RWPE1 (cell line): ENCODE measurements at regions of chr11 and their contacts with region 1.

Region 1: GRCh38 chr11:77047007-77047927 is 13.1 kb downstream of the B3GNT6 start:
- DNase-seq: peak; percentile 73
- H3K27ac ChIP-seq: no peak overlapping the region
- CTCF ChIP-seq: peak; percentile 49

Region 2: GRCh38 chr11:77009533-77010160 is 37.6 kb before region 1 on chr11:
- CTCF ChIA-PET with region 1: no interaction called
- POLR2A ChIA-PET with region 1: no interaction called
- DNase-seq: no peak
- H3K27ac ChIP-seq: no peak overlapping the region
- CTCF ChIP-seq: no peak

Region 3: GRCh38 chr11:77062924-77063323 is 15.7 kb after region 1 on chr11:
- CTCF ChIA-PET with region 1: interaction called, 10 read pairs
- POLR2A ChIA-PET with region 1: no interaction called
- DNase-seq: no peak
- H3K27ac ChIP-seq: no peak overlapping the region
- CTCF ChIP-seq: no peak

Region 4: DNA sequence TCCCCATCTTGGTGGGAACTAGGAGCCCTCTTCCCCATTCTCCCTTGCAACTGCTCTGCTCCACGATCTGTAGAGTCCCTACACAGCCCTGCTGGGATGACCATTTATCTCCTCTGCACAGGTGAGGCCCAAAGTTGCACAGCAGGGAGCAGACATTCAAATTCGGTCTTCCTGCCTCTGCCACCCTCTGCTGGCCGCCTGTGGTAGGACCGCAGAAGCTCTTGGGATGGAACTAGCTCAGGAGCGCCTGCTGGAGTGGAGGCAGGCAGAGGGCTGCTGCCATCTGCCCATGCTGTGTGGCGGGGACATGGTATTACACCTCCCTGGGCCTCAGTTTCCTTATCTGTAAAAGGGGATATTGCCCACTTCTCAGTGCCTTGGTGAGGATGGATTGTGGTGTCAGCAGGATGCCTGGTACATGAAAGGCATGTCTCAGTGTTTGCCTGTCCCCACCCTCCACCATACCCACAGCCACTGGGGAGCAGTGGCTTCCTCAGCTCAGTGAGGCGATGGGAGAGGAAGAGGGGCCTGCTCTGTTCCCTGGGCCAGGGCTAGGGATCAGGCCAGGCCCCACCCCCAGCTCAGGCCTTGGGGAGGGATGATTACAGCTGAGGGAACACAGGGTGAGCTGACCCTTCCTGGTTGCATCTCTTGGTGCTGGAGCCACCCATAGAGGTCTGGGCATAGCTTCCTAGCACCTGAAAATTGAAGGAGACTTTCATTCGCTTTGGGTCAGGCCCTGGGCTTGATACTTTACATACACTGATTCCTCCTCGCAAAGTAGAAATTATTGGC is 44.1 kb after region 1 on chr11:
- CTCF ChIA-PET with region 1: interaction called, 22 read pairs
- POLR2A ChIA-PET with region 1: no interaction called
- DNase-seq: peak; percentile 80
- H3K27ac ChIP-seq: no peak overlapping the region
- CTCF ChIP-seq: peak; percentile 91

Region 5: DNA sequence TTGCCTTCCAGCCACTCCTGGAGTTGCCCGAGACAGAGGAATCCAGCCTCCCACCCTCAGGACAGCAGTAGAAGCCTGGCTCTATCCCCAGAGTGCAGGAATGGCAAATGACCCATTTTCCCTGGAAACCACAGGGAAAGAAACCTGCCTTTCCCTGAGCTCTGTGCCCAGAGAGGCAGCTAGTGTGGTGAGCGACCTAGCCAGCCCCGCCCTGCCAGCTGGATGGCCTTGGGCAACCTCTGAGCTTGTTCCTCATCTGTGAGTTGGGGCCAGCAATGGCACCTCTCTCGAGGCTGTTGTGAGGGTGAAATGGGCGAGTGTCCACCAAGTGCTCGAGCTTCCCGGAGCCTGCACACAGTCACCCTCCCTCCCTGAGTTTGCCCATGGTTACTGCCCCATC is 59.1 kb after region 1 on chr11:
- CTCF ChIA-PET with region 1: interaction called, 10 read pairs
- POLR2A ChIA-PET with region 1: no interaction called
- DNase-seq: no peak
- H3K27ac ChIP-seq: no peak overlapping the region
- CTCF ChIP-seq: no peak